Transverse colon (tissue), 4 donors: ENCODE measurements at regions of chr11 and their contacts with region 1.

Region 1: GRCh38 chr11:126062679-126063506 is at the start of gene CDON:
- DNase-seq: peak; percentile 93
- H3K4me3 ChIP-seq: peak within 1 kb of the TSS; percentile 76 to 90 (median 83)
- H3K27ac ChIP-seq: peak within 1 kb of the TSS; percentile 67 to 87 (median 84)
- H3K4me1 ChIP-seq: peaks cover 4 to 15% (median 8%) of the 10 kb centered on the region in 4 donors
- H3K27me3 ChIP-seq: peaks cover 12% of the 10 kb centered on the region
- CTCF ChIP-seq: peak in 1 of 5 experiments; percentile 21
- EP300 ChIP-seq: no peak
- POLR2A ChIP-seq: peak; percentile 15
- total RNA-seq, gene CDON: 7.6 to 31.0 (median 9.9) TPM

Region 2: GRCh38 chr11:125559888-125560287 is 503.0 kb before region 1 on chr11:
- in situ Hi-C with region 1: no loop called
- intact Hi-C with region 1: no loop called
- DNase-seq: no peak
- H3K4me3 ChIP-seq: no peak overlapping the region
- H3K27ac ChIP-seq: no peak overlapping the region
- H3K4me1 ChIP-seq: no peaks in the 10 kb centered on the region
- H3K27me3 ChIP-seq: no peaks in the 10 kb centered on the region
- CTCF ChIP-seq: no peak
- EP300 ChIP-seq: no peak
- POLR2A ChIP-seq: no peak

Region 3: DNA sequence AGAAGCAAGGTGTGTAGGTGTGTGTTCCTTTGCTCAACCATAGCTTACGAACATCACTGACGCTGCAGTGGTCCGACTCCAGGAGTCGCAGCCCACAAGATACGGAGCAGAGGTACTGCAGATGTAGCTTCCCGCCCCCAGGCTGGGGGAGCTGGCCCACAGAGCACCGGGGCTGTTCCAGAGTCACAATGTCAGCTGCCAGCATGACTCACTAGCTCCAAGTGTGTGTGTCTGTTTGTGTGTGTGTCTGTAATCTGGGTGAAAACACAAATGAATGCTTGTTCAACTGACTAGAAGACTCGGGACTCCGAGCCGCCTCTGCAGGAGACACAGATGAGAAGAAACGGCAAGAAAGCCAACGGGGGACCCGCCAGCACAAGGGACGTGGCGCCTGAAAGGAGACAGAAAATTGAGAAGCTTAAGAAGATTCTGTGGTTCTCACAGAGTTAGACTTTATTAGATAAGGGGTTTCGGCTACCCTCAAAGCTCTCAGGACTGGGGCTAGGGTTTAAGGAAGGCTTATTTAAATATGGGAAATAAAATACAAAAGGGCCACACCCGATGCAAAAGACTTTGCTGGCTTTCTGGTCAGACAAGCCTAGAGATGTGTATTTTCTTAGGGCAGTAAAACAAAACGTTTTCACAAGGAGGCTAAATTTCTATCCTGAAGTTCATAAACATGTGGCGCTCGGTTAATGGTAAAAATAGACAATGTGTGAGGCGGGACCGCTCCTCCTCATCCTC is 106.3 kb before region 1 on chr11:
- in situ Hi-C with region 1: no loop called
- intact Hi-C with region 1: no loop called
- DNase-seq: no peak
- H3K4me3 ChIP-seq: no peak overlapping the region
- H3K27ac ChIP-seq: no peak overlapping the region
- H3K4me1 ChIP-seq: peaks cover 3 to 17% (median 16%) of the 10 kb centered on the region in 4 donors
- H3K27me3 ChIP-seq: no peaks in the 10 kb centered on the region
- CTCF ChIP-seq: no peak
- EP300 ChIP-seq: no peak
- POLR2A ChIP-seq: no peak

Region 4: DNA sequence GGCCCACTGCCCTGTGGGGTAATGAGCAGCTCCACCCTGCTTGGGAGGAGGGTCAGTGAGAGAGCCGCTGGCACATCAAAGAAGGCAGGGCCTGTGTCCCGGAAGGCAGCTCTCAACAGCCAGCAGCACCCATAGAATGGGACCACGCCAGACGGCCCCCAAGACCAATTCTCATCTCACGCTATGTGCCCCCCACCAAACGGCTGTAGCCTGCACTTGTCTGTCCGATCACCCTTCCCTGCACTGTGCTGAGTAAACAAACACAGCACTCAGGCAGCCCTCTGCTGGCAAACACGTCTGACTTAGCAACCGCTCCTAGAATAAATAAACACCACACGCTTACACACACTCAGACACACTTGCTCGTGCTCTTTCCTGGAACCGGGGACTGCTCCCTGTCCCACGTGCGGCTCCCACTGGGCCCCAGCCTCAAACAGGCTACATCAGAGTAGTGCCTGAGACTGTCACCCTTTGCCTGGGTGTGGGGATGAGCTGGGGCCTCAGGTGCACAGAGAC is 53.0 kb after region 1 on chr11:
- in situ Hi-C with region 1: no loop called
- intact Hi-C with region 1: loop called (anchors 10 kb)
- DNase-seq: peak; percentile 73
- H3K4me3 ChIP-seq: no peak overlapping the region
- H3K27ac ChIP-seq: peak overlapping the region; percentile 80 to 91 (median 88)
- H3K4me1 ChIP-seq: peaks cover 29 to 44% (median 38%) of the 10 kb centered on the region in 4 donors
- H3K27me3 ChIP-seq: no peaks in the 10 kb centered on the region
- CTCF ChIP-seq: peak in 4 of 5 experiments; percentile 16 to 59 (median 30)
- EP300 ChIP-seq: peak; percentile 32
- POLR2A ChIP-seq: peak; percentile 22

Region 5: GRCh38 chr11:126140932-126141291 is 78.0 kb after region 1 on chr11:
- in situ Hi-C with region 1: no loop called
- intact Hi-C with region 1: loop called (anchors 10 kb)
- DNase-seq: peak; percentile 57
- H3K4me3 ChIP-seq: no peak overlapping the region
- H3K27ac ChIP-seq: peak overlapping the region; percentile 25 to 82 (median 75)
- H3K4me1 ChIP-seq: peaks cover 7 to 45% (median 18%) of the 10 kb centered on the region in 4 donors
- H3K27me3 ChIP-seq: no peaks in the 10 kb centered on the region
- CTCF ChIP-seq: no peak
- EP300 ChIP-seq: no peak
- POLR2A ChIP-seq: no peak